ENCODE measurements at regions of chr22 and their contacts with region 1.

Region 1: GRCh38 chr22:40276996-40277823 is 69.1 kb upstream of the ADSL start:
- DNase-seq: peak; percentile 78 to 88
- ATAC-seq: peak; percentile 96 to 97
- H3K4me3 ChIP-seq: peak overlapping the region; percentile 43 to 57 (median 51)
- H3K27ac ChIP-seq: peak overlapping the region; percentile 86 to 92 (median 88)
- H3K4me1 ChIP-seq: peaks cover 9 to 34% of the 10 kb centered on the region in 2 donors
- H3K27me3 ChIP-seq: no peaks in the 10 kb centered on the region
- CTCF ChIP-seq: no peak
- POLR2A ChIP-seq: peak; percentile 76 to 93

Region 2: GRCh38 chr22:40044102-40044869 is 232.9 kb before region 1 on chr22:
- in situ Hi-C with region 1: no loop called
- intact Hi-C with region 1: loop called (anchors 2 kb)
- DNase-seq: peak; percentile 99
- ATAC-seq: peak; percentile 91 to 92
- H3K4me3 ChIP-seq: peak overlapping the region; percentile 72 to 86 (median 76)
- H3K27ac ChIP-seq: peak overlapping the region; percentile 91 to 98 (median 94)
- H3K4me1 ChIP-seq: peaks cover 41 to 47% of the 10 kb centered on the region in 2 donors
- H3K27me3 ChIP-seq: no peaks in the 10 kb centered on the region
- CTCF ChIP-seq: no peak
- POLR2A ChIP-seq: peak; percentile 72 to 92

Region 3: GRCh38 chr22:40107851-40108378 is 169.3 kb before region 1 on chr22:
- in situ Hi-C with region 1: no loop called
- intact Hi-C with region 1: loop called (anchors 5 kb)
- DNase-seq: peak; percentile 25 to 39
- ATAC-seq: peak; percentile 81 to 83
- H3K4me3 ChIP-seq: peak overlapping the region; percentile 28 to 40 (median 32)
- H3K27ac ChIP-seq: peak overlapping the region; percentile 70 to 86 (median 80)
- H3K4me1 ChIP-seq: peaks cover 42 to 60% of the 10 kb centered on the region in 2 donors
- H3K27me3 ChIP-seq: no peaks in the 10 kb centered on the region
- CTCF ChIP-seq: no peak
- POLR2A ChIP-seq: no peak

Region 4: DNA sequence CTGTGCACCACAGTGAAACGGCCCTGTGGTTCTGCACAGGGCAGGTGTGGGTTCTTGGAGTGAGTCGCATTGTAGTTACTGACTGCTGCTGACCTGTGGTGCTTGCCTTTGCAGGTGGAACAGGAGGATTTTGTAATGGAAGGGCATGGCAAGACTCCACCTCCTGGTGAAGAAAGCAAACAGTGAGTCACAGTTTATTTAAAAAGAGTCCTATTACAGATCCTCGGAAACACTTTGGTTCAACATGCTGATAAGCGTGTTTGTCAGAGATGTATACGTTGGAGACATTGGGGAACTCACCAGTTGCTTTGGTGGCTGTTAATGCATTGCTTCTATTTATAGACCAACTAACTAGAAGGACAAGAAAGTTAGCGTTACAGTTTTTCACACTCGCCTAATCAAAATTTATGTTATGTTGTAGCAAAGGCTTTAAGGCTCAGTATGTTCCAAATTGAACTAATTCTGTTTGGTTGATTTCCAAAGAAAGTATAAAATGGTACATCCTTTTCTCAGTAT is 121.2 kb before region 1 on chr22:
- in situ Hi-C with region 1: no loop called
- intact Hi-C with region 1: loop called (anchors 5 kb)
- DNase-seq: peak; percentile 71 to 82
- ATAC-seq: peak; percentile 99 to 100
- H3K4me3 ChIP-seq: peak overlapping the region in 1 of 4 donors; percentile 14
- H3K27ac ChIP-seq: peak overlapping the region; percentile 61 to 81 (median 69)
- H3K4me1 ChIP-seq: peaks cover 15 to 17% of the 10 kb centered on the region in 2 donors
- H3K27me3 ChIP-seq: no peaks in the 10 kb centered on the region
- CTCF ChIP-seq: peak in 1 of 5 experiments; percentile 21
- POLR2A ChIP-seq: no peak

Region 5: GRCh38 chr22:40177738-40178416 is 99.3 kb before region 1 on chr22 and contains the start of gene TNRC6B:
- in situ Hi-C with region 1: loop called in 1 of 4 experiments (anchors 10 kb)
- intact Hi-C with region 1: loop called (anchors 2 kb)
- DNase-seq: peak; percentile 88
- ATAC-seq: peak; percentile 96 to 97
- H3K4me3 ChIP-seq: peak within 1 kb of the TSS; percentile 62 to 86 (median 75)
- H3K27ac ChIP-seq: peak within 1 kb of the TSS; percentile 77 to 91 (median 88)
- H3K4me1 ChIP-seq: peaks cover 63 to 71% of the 10 kb centered on the region in 2 donors
- H3K27me3 ChIP-seq: no peaks in the 10 kb centered on the region
- CTCF ChIP-seq: peak in 3 of 5 experiments; percentile 7 to 15 (median 14)
- POLR2A ChIP-seq: peak; percentile 96 to 98
- total RNA-seq, gene TNRC6B: 31.9 to 76.7 (median 57.0) TPM

Region 6: DNA sequence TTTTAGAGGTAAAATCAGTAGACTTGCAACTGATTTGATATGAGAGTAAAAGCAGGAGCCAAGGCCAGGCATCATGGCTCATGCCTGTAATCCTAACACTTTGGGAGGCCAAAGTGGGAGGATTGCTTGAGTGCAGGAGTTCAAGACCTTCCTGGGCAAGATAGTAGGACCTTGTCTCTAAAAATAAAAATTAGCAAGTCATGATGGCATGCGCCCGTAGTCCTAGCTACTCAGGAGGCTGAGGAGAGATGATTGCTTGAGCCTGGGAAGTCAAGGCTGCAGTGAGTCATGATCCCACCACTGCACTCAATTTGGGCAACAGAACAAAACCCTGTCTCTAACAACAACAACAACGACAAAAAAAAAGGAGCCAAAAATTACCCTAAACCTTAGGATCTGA is 106.7 kb after region 1 on chr22:
- in situ Hi-C with region 1: no loop called
- intact Hi-C with region 1: no loop called
- DNase-seq: no peak
- ATAC-seq: no peak
- H3K4me3 ChIP-seq: no peak overlapping the region
- H3K27ac ChIP-seq: no peak overlapping the region
- H3K4me1 ChIP-seq: no peaks in the 10 kb centered on the region
- H3K27me3 ChIP-seq: no peaks in the 10 kb centered on the region
- CTCF ChIP-seq: no peak
- POLR2A ChIP-seq: no peak

Region 7: GRCh38 chr22:40426594-40427333 is 149.6 kb after region 1 on chr22:
- in situ Hi-C with region 1: no loop called
- intact Hi-C with region 1: no loop called
- DNase-seq: peak; percentile 75 to 83
- ATAC-seq: peak; percentile 83 to 85
- H3K4me3 ChIP-seq: no peak overlapping the region
- H3K27ac ChIP-seq: peak overlapping the region; percentile 75 to 87 (median 81)
- H3K4me1 ChIP-seq: peaks cover 33 to 41% of the 10 kb centered on the region in 2 donors
- H3K27me3 ChIP-seq: no peaks in the 10 kb centered on the region
- CTCF ChIP-seq: no peak
- POLR2A ChIP-seq: no peak